IMR-90 (cell line): ENCODE measurements at regions of chrX and their contacts with region 1.

Region 1: DNA sequence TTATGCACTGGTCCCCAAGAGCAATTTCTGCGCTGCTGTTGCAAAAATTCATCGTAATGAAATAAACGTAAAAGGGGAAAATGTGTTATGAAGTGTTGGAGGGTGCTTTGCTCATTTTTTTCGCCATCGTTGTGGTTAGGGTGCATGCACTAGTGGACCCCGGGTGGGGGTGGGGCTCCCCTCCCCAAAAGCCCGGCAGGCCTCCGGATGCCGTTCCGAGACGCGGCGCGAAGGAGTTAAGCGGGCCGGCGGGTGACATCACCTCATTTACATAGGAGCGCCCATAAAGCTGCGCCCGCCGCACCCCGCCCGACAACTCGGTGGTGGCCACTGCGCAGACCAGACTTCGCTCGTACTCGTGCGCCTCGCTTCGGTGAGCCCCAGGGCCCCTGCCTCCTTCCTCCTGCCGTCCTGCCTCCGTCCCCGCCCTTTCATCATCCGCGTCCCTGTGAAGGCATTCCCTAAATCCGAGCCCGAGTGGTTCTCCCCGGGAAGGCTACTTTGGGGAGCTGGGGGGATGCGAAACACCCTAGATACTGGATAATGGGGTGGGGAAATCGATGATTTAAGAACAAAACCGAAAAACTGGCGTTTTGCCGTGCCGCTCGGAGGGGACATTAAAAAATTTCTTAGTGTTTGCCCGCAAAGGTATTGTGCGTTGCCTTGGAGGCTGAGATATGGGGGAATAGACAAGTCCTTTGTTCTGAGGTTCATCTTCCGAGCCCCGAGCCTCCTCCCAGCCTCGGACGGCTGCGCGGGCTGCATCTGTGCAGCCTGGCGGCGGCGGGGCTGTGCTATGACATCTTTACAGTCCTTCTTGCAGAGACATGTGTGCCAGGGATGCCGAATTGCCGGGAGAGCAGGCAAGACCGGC is at the start of gene TMSB4X:
- DNase-seq: peak; percentile 74
- ATAC-seq: peak; percentile 66
- H3K4me3 ChIP-seq: peak within 1 kb of the TSS; percentile 89
- H3K27ac ChIP-seq: peak within 1 kb of the TSS; percentile 96
- H3K4me1 ChIP-seq: peaks cover 2% of the 10 kb centered on the region
- H3K27me3 ChIP-seq: no peaks in the 10 kb centered on the region
- CTCF ChIP-seq: no peak
- POLR2A ChIP-seq: peak; percentile 99
- RAD21 ChIP-seq: no peak; the same call in 1 of the 2 replicates
- total RNA-seq, gene TMSB4X: 9,222 and 11,116 TPM in 2 replicates

Region 2: DNA sequence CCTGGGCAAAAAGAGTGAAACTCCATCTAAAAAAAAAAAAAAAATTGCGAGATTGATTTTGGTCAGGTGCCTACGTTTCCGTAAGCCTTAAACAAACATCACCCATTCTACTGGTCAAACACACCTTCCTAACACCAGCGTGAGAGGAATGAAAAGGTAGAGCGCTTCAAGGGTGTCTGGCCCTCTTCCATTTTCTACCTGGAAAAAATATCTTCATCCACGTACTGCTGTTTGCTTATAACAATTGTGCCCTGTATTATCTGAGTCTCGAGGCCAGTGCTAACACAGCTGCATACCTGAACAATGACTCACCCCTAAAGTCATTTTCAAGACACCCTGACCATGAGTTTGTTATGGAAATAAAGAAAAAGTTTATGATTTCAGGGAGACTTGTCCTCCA is 13.8 kb after region 1 on chrX:
- CTCF ChIA-PET with region 1: no interaction called
- POLR2A ChIA-PET with region 1: no interaction called
- dilution Hi-C with region 1: no loop called
- in situ Hi-C with region 1: no loop called
- intact Hi-C with region 1: no loop called
- DNase-seq: peak; percentile 74
- ATAC-seq: peak; percentile 42
- H3K4me3 ChIP-seq: no peak overlapping the region
- H3K27ac ChIP-seq: no peak overlapping the region
- H3K4me1 ChIP-seq: no peaks in the 10 kb centered on the region; the same call in 1 of the 2 replicates
- H3K27me3 ChIP-seq: no peaks in the 10 kb centered on the region
- CTCF ChIP-seq: no peak
- POLR2A ChIP-seq: no peak
- RAD21 ChIP-seq: no peak

Region 3: DNA sequence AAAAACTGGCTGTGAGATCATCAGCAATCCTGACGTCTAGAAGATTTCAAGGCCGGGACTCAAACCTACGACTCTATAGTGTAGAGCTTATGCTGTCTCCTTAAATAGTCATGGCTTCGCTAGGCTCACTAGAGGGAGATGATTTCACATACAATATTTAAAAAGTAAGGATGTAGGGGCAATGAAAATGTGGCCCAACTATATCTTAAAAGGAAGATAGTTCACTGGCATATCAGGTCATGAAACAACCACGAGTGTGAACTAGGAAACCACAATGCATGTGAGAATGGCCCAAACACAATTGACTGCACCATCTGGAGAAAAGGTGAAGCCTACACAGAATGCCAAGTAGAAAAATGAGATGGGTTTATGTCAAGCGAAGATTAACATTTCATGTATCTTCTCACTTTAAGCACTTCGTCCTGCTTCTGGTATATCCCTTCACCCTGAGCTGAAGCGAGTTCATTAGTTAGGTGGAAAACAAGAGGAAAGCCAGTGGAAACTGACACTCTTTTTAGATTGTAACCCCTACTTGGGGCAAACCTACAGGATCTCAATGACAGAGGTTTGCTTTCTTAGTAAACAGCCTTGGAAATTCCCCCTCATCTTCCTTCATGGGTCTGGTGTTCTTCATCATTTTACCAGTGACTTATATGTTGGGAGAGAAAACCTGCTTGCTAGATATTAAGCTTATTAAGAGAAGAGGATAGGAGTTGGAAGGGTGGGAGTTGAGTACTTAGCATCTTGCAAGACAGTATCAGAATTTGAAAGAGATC is 52.0 kb after region 1 on chrX:
- CTCF ChIA-PET with region 1: no interaction called
- POLR2A ChIA-PET with region 1: no interaction called
- dilution Hi-C with region 1: no loop called
- in situ Hi-C with region 1: no loop called
- intact Hi-C with region 1: no loop called
- DNase-seq: no peak
- ATAC-seq: no peak
- H3K4me3 ChIP-seq: no peak overlapping the region
- H3K27ac ChIP-seq: no peak overlapping the region
- H3K4me1 ChIP-seq: peaks cover 18% of the 10 kb centered on the region
- H3K27me3 ChIP-seq: no peaks in the 10 kb centered on the region
- CTCF ChIP-seq: no peak
- POLR2A ChIP-seq: no peak
- RAD21 ChIP-seq: no peak

Region 4: GRCh38 chrX:13078739-13079444 is 103.9 kb after region 1 on chrX:
- CTCF ChIA-PET with region 1: no interaction called
- POLR2A ChIA-PET with region 1: interaction called, 5 read pairs
- dilution Hi-C with region 1: no loop called
- in situ Hi-C with region 1: no loop called
- intact Hi-C with region 1: loop called (anchors 10 kb)
- DNase-seq: peak; percentile 81
- ATAC-seq: peak; percentile 73
- H3K4me3 ChIP-seq: no peak overlapping the region
- H3K27ac ChIP-seq: peak overlapping the region; percentile 93
- H3K4me1 ChIP-seq: peaks cover 4% of the 10 kb centered on the region
- H3K27me3 ChIP-seq: no peaks in the 10 kb centered on the region
- CTCF ChIP-seq: no peak
- POLR2A ChIP-seq: no peak
- RAD21 ChIP-seq: no peak

Region 5: DNA sequence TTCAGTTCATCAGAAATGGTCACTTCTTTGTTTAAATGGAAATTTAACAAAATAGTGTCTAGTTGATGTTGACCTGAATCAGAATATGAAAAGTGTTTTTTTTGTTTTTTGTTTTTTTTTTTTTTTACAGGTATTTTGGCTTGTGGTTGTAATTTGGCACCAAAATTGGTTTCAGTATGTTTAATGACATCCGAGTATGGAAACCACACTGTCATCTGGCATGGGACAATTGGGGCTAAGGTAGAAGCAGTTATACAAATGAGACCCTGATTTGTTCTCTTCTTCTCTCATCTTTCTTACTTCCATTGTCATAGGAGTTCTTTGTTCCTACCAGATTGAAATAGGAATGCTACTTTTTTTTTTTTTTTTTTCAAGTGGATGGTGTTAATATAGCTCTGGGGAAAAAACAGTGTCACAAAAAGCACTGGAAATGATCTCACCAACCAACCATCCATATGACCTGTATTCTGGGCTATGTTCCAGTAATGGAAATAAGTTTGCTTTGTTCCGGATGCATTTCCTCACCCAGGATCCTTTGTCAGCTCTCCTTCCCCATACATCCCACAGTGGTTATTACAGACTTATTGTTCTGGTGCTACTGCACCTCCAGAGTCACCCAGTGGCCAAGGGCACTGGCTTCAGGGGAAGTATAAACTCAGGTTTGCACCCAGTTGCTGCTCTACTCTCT is 249.0 kb after region 1 on chrX:
- CTCF ChIA-PET with region 1: no interaction called
- POLR2A ChIA-PET with region 1: no interaction called
- dilution Hi-C with region 1: no loop called
- in situ Hi-C with region 1: no loop called
- intact Hi-C with region 1: loop called (anchors 5 kb)
- DNase-seq: peak; percentile 91
- ATAC-seq: peak; percentile 57
- H3K4me3 ChIP-seq: no peak overlapping the region
- H3K27ac ChIP-seq: peak overlapping the region; percentile 78
- H3K4me1 ChIP-seq: peaks cover 4% of the 10 kb centered on the region
- H3K27me3 ChIP-seq: no peaks in the 10 kb centered on the region
- CTCF ChIP-seq: no peak
- POLR2A ChIP-seq: no peak
- RAD21 ChIP-seq: no peak

Region 6: GRCh38 chrX:13376857-13377549 is 402.0 kb after region 1 on chrX:
- CTCF ChIA-PET with region 1: no interaction called
- POLR2A ChIA-PET with region 1: interaction called, 3 read pairs
- dilution Hi-C with region 1: no loop called
- in situ Hi-C with region 1: loop called (anchors 10 kb)
- intact Hi-C with region 1: loop called (anchors 2 kb)
- DNase-seq: peak; percentile 95
- ATAC-seq: peak; percentile 45
- H3K4me3 ChIP-seq: no peak overlapping the region
- H3K27ac ChIP-seq: peak overlapping the region; percentile 97
- H3K4me1 ChIP-seq: peaks cover 15% of the 10 kb centered on the region
- H3K27me3 ChIP-seq: no peaks in the 10 kb centered on the region
- CTCF ChIP-seq: no peak
- POLR2A ChIP-seq: no peak
- RAD21 ChIP-seq: no peak

Region 7: GRCh38 chrX:13653022-13653693 is 678.1 kb after region 1 on chrX and contains the start of gene TCEANC:
- CTCF ChIA-PET with region 1: no interaction called
- POLR2A ChIA-PET with region 1: no interaction called
- dilution Hi-C with region 1: no loop called
- in situ Hi-C with region 1: no loop called
- intact Hi-C with region 1: loop called (anchors 5 kb)
- DNase-seq: peak; percentile 98
- ATAC-seq: peak; percentile 97
- H3K4me3 ChIP-seq: peak within 1 kb of the TSS; percentile 73
- H3K27ac ChIP-seq: peak within 1 kb of the TSS; percentile 96
- H3K4me1 ChIP-seq: peaks cover 2% of the 10 kb centered on the region
- H3K27me3 ChIP-seq: no peaks in the 10 kb centered on the region; the same call in 1 of the 2 replicates
- CTCF ChIP-seq: no peak
- POLR2A ChIP-seq: peak; percentile 81
- RAD21 ChIP-seq: no peak
- total RNA-seq, gene TCEANC: 1.4 and 2.5 TPM in 2 replicates

Region 8: DNA sequence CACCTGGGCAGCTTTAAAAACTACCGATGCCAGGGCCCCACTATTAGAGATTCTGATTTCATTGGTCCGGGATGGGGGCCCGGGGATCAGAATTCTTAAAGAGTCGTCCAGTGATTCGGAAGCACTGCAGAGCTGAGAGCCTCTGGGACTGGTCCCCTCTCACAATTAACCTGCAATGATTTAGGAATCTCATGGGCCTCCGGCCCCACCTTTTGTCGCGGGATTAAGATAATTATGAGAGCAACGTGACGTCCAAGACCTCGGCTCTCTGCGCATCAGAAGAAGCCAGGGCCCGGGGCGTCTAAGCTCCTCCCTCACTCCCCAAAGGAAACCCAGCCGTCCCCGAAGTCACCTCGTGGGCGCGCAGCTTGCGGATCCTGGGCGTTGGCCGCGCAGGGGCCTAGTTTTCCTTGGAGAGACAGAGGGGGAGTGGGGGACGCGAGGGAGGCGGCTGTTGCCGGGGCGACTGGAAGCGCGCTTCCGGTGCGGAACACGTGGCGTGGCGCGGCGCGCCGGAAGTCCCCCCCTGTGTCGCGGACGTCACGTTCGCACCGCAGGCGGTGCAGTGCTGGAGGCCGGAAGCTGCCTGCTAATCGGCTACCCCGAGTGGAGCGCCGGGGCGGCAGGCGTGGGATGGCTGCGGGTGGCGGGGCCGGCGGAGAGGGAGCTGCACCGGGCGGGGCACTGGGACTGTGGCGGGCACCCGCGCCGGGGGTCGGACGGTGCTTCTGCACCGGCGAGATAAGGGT is 1054.6 kb after region 1 on chrX and contains the start of gene GEMIN8:
- CTCF ChIA-PET with region 1: no interaction called
- POLR2A ChIA-PET with region 1: no interaction called
- dilution Hi-C with region 1: no loop called
- in situ Hi-C with region 1: loop called (anchors 25 kb)
- intact Hi-C with region 1: no loop called
- DNase-seq: peak; percentile 91
- ATAC-seq: peak; percentile 87
- H3K4me3 ChIP-seq: peak within 1 kb of the TSS; percentile 68
- H3K27ac ChIP-seq: peak within 1 kb of the TSS; percentile 80
- H3K4me1 ChIP-seq: peaks cover 4% of the 10 kb centered on the region
- H3K27me3 ChIP-seq: peaks cover 3% of the 10 kb centered on the region; the same call in 1 of the 2 replicates
- CTCF ChIP-seq: no peak
- POLR2A ChIP-seq: peak; percentile 81
- RAD21 ChIP-seq: no peak
- total RNA-seq, gene GEMIN8: 11.1 and 12.0 TPM in 2 replicates